ENCODE measurements at regions of chr13 and their contacts with region 1.

Region 1: DNA sequence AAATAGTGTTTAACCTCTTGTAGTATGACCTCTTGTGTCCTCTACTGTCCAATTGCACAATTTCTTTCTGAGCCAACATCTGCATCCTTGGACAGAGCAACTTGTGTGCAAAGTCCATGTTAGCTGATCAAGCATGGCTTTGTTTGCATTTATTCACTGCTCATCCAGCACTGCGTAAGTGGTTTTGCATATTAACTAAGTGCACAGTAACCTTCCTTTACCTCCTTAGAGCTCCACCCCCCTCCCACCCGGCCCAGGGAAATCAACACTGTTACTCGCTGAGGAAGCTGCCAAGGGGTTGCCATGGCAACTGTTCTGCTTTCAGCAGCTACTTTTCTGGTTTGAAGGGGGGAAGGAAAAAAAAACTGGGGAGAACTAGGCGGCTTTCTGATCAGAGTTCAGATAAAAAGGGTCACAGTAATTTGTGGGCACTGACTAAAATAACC is 153.5 kb upstream of the KLF12 start:
- DNase-seq: no peak
- H3K4me3 ChIP-seq: no peak overlapping the region; the same call in 1 of the 2 replicates
- CTCF ChIP-seq: no peak

Region 2: GRCh38 chr13:73677048-73677601 is 610.6 kb before region 1 on chr13:
- CTCF ChIA-PET with region 1: no interaction called
- POLR2A ChIA-PET with region 1: no interaction called
- DNase-seq: peak; percentile 9
- H3K4me3 ChIP-seq: no peak overlapping the region
- CTCF ChIP-seq: no peak

Region 3: DNA sequence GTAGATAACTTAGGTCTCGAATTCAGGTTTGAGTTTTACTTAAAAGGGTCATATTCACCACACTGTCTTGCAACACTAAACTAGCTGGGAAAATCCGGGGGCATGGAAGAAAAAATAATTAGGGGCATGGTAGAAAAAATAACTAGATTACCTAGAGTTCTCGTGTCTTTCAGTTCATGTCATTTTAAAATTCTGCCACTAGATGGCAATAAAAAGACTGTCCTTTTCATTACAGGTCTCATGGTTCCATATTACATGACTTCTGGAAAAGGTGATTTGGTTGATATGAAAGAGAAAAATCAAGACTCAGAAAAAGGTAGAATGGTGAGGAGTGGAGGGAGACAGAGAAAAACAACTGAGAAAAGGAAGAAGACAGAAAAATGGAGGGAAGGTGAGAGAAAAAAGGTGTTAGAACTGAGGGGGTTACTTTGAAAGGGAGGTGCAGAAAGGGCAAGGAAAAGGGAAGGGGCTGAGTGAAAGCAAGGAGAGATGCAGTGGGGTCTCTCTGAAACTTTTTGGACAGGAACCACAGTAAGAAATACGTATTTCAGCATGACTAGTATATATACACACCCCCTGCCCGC is 452.5 kb before region 1 on chr13:
- CTCF ChIA-PET with region 1: interaction called, 16 read pairs
- POLR2A ChIA-PET with region 1: no interaction called
- DNase-seq: no peak
- H3K4me3 ChIP-seq: no peak overlapping the region
- CTCF ChIP-seq: peak; percentile 17

Region 4: DNA sequence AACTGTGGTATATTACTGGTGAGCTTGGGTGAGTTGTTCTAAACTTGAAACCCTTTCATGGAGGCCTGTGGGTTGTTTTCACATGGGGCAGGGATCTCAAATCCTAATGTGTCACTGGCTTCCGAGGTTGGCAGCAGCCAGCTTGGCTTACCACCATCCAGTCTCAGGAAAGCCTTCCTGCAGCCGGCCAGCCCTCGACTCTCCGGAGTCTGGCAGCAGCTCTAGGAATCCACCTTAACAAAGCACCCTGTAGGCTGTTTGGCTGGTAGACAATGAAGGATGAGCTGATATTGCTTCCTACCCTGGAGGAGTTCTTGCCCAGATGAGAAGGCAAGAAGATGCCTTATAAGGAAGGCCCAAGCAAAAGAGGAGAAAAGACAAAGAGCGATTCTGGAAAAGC is 341.9 kb before region 1 on chr13:
- CTCF ChIA-PET with region 1: interaction called, 11 read pairs
- POLR2A ChIA-PET with region 1: no interaction called
- DNase-seq: no peak
- H3K4me3 ChIP-seq: no peak overlapping the region
- CTCF ChIP-seq: no peak

Region 5: GRCh38 chr13:74301258-74301935 is 13.7 kb after region 1 on chr13:
- CTCF ChIA-PET with region 1: interaction called, 10 read pairs
- POLR2A ChIA-PET with region 1: interaction called, 3 read pairs
- DNase-seq: no peak
- H3K4me3 ChIP-seq: no peak overlapping the region
- CTCF ChIP-seq: no peak

Region 6: DNA sequence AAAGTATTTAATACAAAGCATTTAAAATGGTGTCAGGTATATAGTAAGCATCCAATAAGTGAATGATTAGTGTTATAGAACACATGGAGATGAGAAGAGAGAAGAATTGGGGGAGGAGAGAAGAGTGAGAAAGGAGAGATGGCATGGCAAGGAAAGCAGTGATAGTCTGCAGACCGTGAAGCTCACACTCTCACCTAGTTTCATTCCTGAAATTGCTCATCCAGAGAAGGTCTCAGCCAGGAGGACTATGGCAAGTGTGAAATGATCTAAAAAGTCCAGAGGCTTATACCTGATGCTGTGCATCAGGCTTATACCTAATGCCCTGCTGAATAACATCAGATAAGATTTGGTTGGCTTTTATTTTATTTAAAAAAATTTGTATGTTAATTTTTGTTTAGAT is 198.0 kb after region 1 on chr13:
- CTCF ChIA-PET with region 1: no interaction called
- POLR2A ChIA-PET with region 1: no interaction called
- DNase-seq: no peak
- H3K4me3 ChIP-seq: no peak overlapping the region
- CTCF ChIP-seq: no peak

Region 7: DNA sequence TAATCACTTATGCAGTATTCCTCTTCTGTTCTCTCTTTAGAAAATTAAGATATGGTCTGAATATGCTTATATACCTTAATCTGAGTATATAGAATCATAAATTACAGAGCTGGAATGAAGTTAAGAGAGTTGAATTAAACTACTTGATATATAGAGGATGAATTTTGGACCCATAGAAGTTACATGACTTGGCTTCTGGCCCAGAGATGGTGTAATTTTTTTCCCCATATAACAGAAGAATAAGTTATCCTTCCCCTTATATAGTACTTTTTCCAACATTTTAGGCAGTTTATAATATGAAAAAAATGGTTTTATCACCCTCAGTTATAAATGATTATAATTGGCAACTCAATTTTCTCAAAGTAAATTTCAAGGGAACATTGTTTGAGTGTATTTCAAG is 577.9 kb after region 1 on chr13:
- CTCF ChIA-PET with region 1: no interaction called
- POLR2A ChIA-PET with region 1: no interaction called
- DNase-seq: no peak
- H3K4me3 ChIP-seq: no peak overlapping the region
- CTCF ChIP-seq: no peak

Region 8: GRCh38 chr13:75219479-75220237 is 931.9 kb after region 1 on chr13:
- CTCF ChIA-PET with region 1: interaction called, 15 read pairs
- POLR2A ChIA-PET with region 1: no interaction called
- DNase-seq: no peak
- H3K4me3 ChIP-seq: peak overlapping the region; percentile 35
- CTCF ChIP-seq: peak; percentile 95